ENCODE measurements at regions of chr5 and their contacts with region 1.

Region 1: GRCh38 chr5:63822614-63823013 is 139.6 kb downstream of the HTR1A start:
- DNase-seq: no peak
- ATAC-seq: no peak
- H3K4me3 ChIP-seq: no peak overlapping the region
- H3K27ac ChIP-seq: no peak overlapping the region
- H3K4me1 ChIP-seq: no peaks in the 10 kb centered on the region
- H3K27me3 ChIP-seq: no peaks in the 10 kb centered on the region
- CTCF ChIP-seq: no peak
- POLR2A ChIP-seq: no peak
- RAD21 ChIP-seq: no peak

Region 2: DNA sequence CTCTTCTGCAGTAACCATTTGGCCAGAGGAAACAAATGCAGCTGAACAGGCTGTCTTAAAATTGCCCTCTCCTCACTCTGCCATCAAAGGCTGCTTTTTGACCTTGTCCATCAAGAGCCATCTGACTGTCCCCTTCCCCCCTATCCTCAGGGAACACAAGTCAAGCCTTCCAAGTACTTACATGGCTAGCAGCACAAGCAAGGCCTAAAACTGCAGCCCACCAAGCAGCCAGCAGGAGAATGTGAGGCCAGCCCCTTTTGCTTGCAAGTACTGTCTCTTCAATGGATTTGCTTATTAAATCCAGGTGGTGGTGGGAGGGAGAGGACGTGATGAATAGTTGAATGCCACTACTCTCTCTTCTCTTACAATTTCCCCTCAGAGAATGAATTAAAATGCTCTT is 56.2 kb after region 1 on chr5:
- CTCF ChIA-PET with region 1: no interaction called
- POLR2A ChIA-PET with region 1: no interaction called
- dilution Hi-C with region 1: no loop called
- in situ Hi-C with region 1: no loop called
- intact Hi-C with region 1: loop called (anchors 5 kb)
- DNase-seq: no peak
- ATAC-seq: no peak
- H3K4me3 ChIP-seq: no peak overlapping the region
- H3K27ac ChIP-seq: no peak overlapping the region
- H3K4me1 ChIP-seq: no peaks in the 10 kb centered on the region
- H3K27me3 ChIP-seq: no peaks in the 10 kb centered on the region
- CTCF ChIP-seq: no peak
- POLR2A ChIP-seq: no peak
- RAD21 ChIP-seq: no peak